Heart right ventricle (tissue), 16 donors: ENCODE measurements at regions of chr15 and their contacts with region 1.

Region 1: GRCh38 chr15:99213187-99213811 is 36.1 kb downstream of the TTC23 start:
- DNase-seq: peak; percentile 77 to 84
- ATAC-seq: peak; percentile 74 to 91 (median 86)
- H3K4me3 ChIP-seq: no peak overlapping the region
- H3K27ac ChIP-seq: peak overlapping the region in 7 of 10 donors; percentile 7 to 80 (median 42)
- H3K4me1 ChIP-seq: peaks cover 0 to 23% (median 9%) of the 10 kb centered on the region in 9 donors
- H3K27me3 ChIP-seq: no peaks in the 10 kb centered on the region
- CTCF ChIP-seq: peak; percentile 80 to 96 (median 94)

Region 2: DNA sequence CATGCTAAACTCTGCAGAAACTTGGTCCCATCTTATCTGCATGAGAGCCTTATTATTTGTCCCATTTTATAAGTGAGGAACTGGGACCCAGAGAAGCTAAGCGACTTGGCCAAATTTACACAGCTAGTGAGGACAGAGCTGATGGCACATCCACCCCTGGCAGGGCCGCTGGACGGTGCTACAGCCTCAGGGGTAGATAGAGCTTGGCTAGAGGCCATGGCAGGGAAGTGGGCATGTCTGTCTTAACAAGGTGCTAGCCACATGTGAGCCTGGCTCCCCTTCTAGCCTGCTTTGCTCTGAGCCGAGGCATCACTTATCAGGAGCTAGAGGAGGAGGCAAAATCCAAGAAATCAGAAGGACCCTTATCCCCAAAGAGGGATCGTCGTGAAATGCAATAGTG is 145.1 kb before region 1 on chr15:
- intact Hi-C with region 1: no loop called
- DNase-seq: no peak
- ATAC-seq: no peak
- H3K4me3 ChIP-seq: no peak overlapping the region
- H3K27ac ChIP-seq: no peak overlapping the region
- H3K4me1 ChIP-seq: peaks cover 0 to 2% (median 0%) of the 10 kb centered on the region in 9 donors
- H3K27me3 ChIP-seq: no peaks in the 10 kb centered on the region
- CTCF ChIP-seq: no peak

Region 3: GRCh38 chr15:99155961-99156450 is 57.3 kb before region 1 on chr15:
- intact Hi-C with region 1: loop called in 1 of 10 experiments (anchors 10 kb)
- DNase-seq: no peak
- ATAC-seq: no peak
- H3K4me3 ChIP-seq: no peak overlapping the region
- H3K27ac ChIP-seq: no peak overlapping the region
- H3K4me1 ChIP-seq: peaks cover 0 to 5% (median 0%) of the 10 kb centered on the region in 9 donors
- H3K27me3 ChIP-seq: no peaks in the 10 kb centered on the region
- CTCF ChIP-seq: no peak

Region 4: GRCh38 chr15:99181545-99181971 is 31.7 kb before region 1 on chr15:
- intact Hi-C with region 1: loop called in 1 of 10 experiments (anchors 1 kb)
- DNase-seq: peak; percentile 42 to 64
- ATAC-seq: peak; percentile 69 to 91 (median 83)
- H3K4me3 ChIP-seq: peak overlapping the region in 1 of 10 donors; percentile 5
- H3K27ac ChIP-seq: peak overlapping the region; percentile 38 to 86 (median 76)
- H3K4me1 ChIP-seq: peaks cover 0 to 48% (median 26%) of the 10 kb centered on the region in 9 donors
- H3K27me3 ChIP-seq: no peaks in the 10 kb centered on the region
- CTCF ChIP-seq: no peak

Region 5: GRCh38 chr15:99578809-99579208 is 365.5 kb after region 1 on chr15:
- intact Hi-C with region 1: no loop called
- DNase-seq: no peak
- ATAC-seq: no peak
- H3K4me3 ChIP-seq: no peak overlapping the region
- H3K27ac ChIP-seq: peak overlapping the region in 1 of 10 donors; percentile 14
- H3K4me1 ChIP-seq: peaks cover 8 to 99% (median 63%) of the 10 kb centered on the region in 9 donors
- H3K27me3 ChIP-seq: no peaks in the 10 kb centered on the region
- CTCF ChIP-seq: no peak